Mammary epithelial cell (primary cell): ENCODE measurements at regions of chr12 and their contacts with region 1.

Region 1: DNA sequence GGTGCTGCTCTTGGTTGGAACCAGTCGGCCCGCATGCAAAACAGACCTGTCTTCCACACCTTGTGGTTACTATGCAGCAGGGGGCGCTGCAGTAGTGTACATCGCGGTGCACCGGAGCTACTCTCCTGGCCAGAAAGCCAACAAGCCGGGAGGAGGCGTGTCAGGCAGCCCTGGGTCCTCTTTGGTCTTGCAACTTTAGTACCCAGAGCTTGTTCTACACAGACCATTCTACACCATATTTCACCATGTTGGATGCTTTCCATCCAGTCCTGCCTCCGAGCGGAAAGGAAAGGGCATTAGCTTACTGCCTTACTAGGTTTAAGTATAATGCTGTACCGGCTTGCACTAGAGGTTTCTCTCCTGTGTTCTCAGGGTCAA is 927 bp upstream of the TMTC2 start:
- DNase-seq: peak; percentile 87
- H3K4me3 ChIP-seq: peak overlapping the region; percentile 58 to 99 (median 72)
- H3K27ac ChIP-seq: peak overlapping the region; percentile 81
- H3K4me1 ChIP-seq: peaks cover 13% of the 10 kb centered on the region
- H3K27me3 ChIP-seq: no peaks in the 10 kb centered on the region
- CTCF ChIP-seq: peak; percentile 68 to 94

Region 2: GRCh38 chr12:82527165-82527780 is 158.5 kb before region 1 on chr12:
- CTCF ChIA-PET with region 1: interaction called, 3 read pairs
- dilution Hi-C with region 1: no loop called
- in situ Hi-C with region 1: no loop called
- intact Hi-C with region 1: loop called (anchors 2 kb)
- DNase-seq: peak; percentile 41
- H3K4me3 ChIP-seq: no peak overlapping the region
- H3K27ac ChIP-seq: no peak overlapping the region
- H3K4me1 ChIP-seq: no peaks in the 10 kb centered on the region
- H3K27me3 ChIP-seq: peaks cover 5% of the 10 kb centered on the region
- CTCF ChIP-seq: peak; percentile 88 to 94

Region 3: DNA sequence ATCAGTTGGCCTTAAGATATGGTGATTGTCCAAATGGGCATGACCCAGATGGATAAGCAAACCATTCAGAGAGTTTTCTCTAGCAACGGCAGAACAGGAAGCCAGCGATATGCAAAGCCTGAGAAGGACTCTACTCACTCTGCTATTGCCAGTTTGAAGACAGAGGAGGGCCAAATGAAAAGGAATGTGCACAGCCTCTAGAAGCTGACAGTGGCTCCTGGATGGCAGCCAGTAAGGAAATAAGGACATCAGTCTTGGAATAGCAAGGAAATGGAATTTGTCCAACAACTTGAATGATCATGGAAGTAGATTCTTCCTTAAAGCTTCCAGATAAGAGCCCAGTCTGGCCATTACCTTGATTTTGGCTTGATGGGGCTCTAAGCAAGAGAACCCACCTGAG is 60.9 kb after region 1 on chr12:
- CTCF ChIA-PET with region 1: no interaction called
- dilution Hi-C with region 1: no loop called
- in situ Hi-C with region 1: no loop called
- intact Hi-C with region 1: no loop called
- DNase-seq: no peak
- H3K4me3 ChIP-seq: no peak overlapping the region
- H3K27ac ChIP-seq: no peak overlapping the region
- H3K4me1 ChIP-seq: no peaks in the 10 kb centered on the region
- H3K27me3 ChIP-seq: no peaks in the 10 kb centered on the region
- CTCF ChIP-seq: no peak

Region 4: DNA sequence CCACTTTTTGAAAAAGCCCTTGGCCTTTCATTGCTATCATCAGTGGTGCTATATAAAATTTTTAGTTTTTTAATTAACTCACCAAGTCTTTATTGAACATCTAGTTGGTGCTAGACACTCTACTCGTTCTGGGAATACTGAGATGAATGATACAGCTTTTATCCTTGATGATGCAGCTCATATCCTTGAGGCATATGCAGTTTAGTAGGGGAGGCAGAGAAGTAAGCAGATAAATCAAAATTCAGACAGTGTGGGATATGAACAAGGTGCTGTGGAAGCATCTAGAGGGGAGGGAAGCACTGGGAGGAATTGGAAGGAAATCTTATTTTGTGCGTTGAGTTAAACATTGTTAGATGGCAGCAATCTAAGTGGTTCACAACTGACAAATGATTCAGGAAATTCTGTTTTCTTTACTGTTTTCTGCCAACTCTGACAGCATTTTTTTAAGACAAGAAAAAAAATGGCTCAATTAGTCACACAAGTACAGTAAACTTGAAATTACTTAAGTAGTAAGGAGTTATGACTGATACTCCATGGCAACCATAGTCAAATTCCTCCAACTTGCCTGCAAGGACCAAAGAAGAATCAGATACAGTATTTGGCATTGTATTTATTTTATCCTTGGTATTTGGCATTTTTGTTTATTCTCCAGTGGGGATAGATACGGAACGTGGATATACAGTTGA is 120.2 kb after region 1 on chr12:
- CTCF ChIA-PET with region 1: no interaction called
- dilution Hi-C with region 1: no loop called
- in situ Hi-C with region 1: no loop called
- intact Hi-C with region 1: loop called (anchors 10 kb)
- DNase-seq: peak; percentile 48
- H3K4me3 ChIP-seq: no peak overlapping the region
- H3K27ac ChIP-seq: peak overlapping the region; percentile 22
- H3K4me1 ChIP-seq: peaks cover 17% of the 10 kb centered on the region
- H3K27me3 ChIP-seq: no peaks in the 10 kb centered on the region
- CTCF ChIP-seq: no peak

Region 5: DNA sequence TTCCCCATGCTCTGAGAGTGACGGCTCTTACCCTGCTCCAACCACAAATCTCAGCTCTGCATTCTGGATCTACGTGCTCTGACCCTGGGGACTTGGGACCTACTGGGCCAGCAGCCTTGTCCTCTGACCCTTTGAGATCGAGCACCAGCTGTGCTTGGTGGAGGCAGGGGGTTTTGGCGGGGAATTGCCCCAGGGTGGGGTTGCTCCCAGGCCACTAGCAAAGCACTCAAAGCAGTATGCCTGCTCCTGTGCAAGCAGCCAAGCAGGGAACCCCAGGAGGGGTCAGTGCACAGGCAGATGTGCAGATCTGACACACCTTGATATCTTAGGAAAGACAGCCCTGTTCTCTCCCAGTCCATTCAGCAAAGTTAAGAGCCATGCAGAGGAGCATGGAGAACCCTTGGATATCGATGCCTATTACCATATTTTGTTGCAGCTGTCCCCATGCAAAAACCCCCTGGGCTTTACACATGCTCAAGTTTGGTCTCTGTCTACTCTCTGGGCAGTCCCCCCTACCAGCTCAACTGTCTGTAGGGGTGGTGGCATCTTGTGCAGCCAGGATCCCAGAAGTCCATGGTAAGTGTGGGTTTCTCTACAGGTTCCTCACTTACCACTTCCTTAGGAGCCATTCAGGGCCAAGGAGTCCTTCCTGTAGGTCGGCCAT is 319.9 kb after region 1 on chr12:
- CTCF ChIA-PET with region 1: no interaction called
- dilution Hi-C with region 1: no loop called
- in situ Hi-C with region 1: no loop called
- intact Hi-C with region 1: loop called (anchors 5 kb)
- DNase-seq: no peak
- H3K4me3 ChIP-seq: no peak overlapping the region
- H3K27ac ChIP-seq: no peak overlapping the region
- H3K4me1 ChIP-seq: no peaks in the 10 kb centered on the region
- H3K27me3 ChIP-seq: no peaks in the 10 kb centered on the region
- CTCF ChIP-seq: no peak

Region 6: GRCh38 chr12:83434600-83434999 is 748.8 kb after region 1 on chr12:
- CTCF ChIA-PET with region 1: no interaction called
- dilution Hi-C with region 1: no loop called
- in situ Hi-C with region 1: no loop called
- intact Hi-C with region 1: loop called (anchors 5 kb)
- DNase-seq: no peak
- H3K4me3 ChIP-seq: no peak overlapping the region
- H3K27ac ChIP-seq: no peak overlapping the region
- H3K4me1 ChIP-seq: no peaks in the 10 kb centered on the region
- H3K27me3 ChIP-seq: no peaks in the 10 kb centered on the region
- CTCF ChIP-seq: peak in 1 of 2 donors; percentile 2

Region 7: GRCh38 chr12:84397263-84397662 is 1711.5 kb after region 1 on chr12:
- CTCF ChIA-PET with region 1: no interaction called
- dilution Hi-C with region 1: no loop called
- in situ Hi-C with region 1: no loop called
- intact Hi-C with region 1: loop called (anchors 2 kb)
- DNase-seq: no peak
- H3K4me3 ChIP-seq: no peak overlapping the region
- H3K27ac ChIP-seq: no peak overlapping the region
- H3K4me1 ChIP-seq: no peaks in the 10 kb centered on the region
- H3K27me3 ChIP-seq: no peaks in the 10 kb centered on the region
- CTCF ChIP-seq: peak; percentile 15 to 30